Endothelial cell of umbilical vein (primary cell): ENCODE measurements at regions of chr15 and their contacts with region 1.

Region 1: GRCh38 chr15:36883713-36884517 is 216.4 kb downstream of the MEIS2 start:
- DNase-seq: peak; percentile 79
- H3K4me3 ChIP-seq: no peak overlapping the region
- H3K27ac ChIP-seq: no peak overlapping the region
- H3K4me1 ChIP-seq: peaks cover 11% of the 10 kb centered on the region
- H3K27me3 ChIP-seq: peaks cover 90 to 99% of the 10 kb centered on the region in 2 experiments
- CTCF ChIP-seq: peak; percentile 72 to 91
- POLR2A ChIP-seq: no peak

Region 2: GRCh38 chr15:36501063-36501678 is 382.7 kb before region 1 on chr15:
- CTCF ChIA-PET with region 1: interaction called, 3 read pairs
- POLR2A ChIA-PET with region 1: no interaction called
- dilution Hi-C with region 1: no loop called
- intact Hi-C with region 1: loop called (anchors 5 kb)
- DNase-seq: peak; percentile 69
- H3K4me3 ChIP-seq: no peak overlapping the region
- H3K27ac ChIP-seq: no peak overlapping the region
- H3K4me1 ChIP-seq: peaks cover 4% of the 10 kb centered on the region
- H3K27me3 ChIP-seq: no peaks in the 10 kb centered on the region
- CTCF ChIP-seq: peak; percentile 55 to 64
- POLR2A ChIP-seq: no peak

Region 3: DNA sequence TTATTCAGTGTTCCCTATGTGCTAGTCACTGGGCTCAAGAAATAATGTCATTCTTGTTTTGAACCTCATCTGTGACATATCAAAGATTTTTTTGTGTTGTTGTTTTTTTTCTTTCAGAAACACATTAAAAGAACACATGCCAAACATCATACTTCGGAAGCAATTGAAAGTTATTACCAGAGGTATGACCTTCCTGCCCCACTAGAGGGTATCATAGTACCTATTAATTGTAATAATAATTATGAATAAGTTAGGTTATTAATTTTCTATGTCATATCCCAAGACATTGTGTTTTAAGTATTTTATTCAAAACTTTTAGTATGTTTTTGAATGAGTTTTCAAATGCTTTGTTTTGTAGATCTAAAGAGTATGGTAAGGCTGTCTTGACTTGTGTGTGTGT is 238.8 kb before region 1 on chr15:
- CTCF ChIA-PET with region 1: no interaction called
- POLR2A ChIA-PET with region 1: no interaction called
- dilution Hi-C with region 1: no loop called
- intact Hi-C with region 1: loop called (anchors 2 kb)
- DNase-seq: peak; percentile 29
- H3K4me3 ChIP-seq: no peak overlapping the region
- H3K27ac ChIP-seq: no peak overlapping the region
- H3K4me1 ChIP-seq: no peaks in the 10 kb centered on the region
- H3K27me3 ChIP-seq: no peaks in the 10 kb centered on the region
- CTCF ChIP-seq: no peak
- POLR2A ChIP-seq: no peak

Region 4: GRCh38 chr15:37106490-37107001 is 222.6 kb after region 1 on chr15:
- CTCF ChIA-PET with region 1: interaction called, 53 read pairs
- POLR2A ChIA-PET with region 1: no interaction called
- dilution Hi-C with region 1: no loop called
- intact Hi-C with region 1: loop called (anchors 1 kb)
- DNase-seq: peak; percentile 34
- H3K4me3 ChIP-seq: no peak overlapping the region
- H3K27ac ChIP-seq: no peak overlapping the region
- H3K4me1 ChIP-seq: peaks cover 12% of the 10 kb centered on the region
- H3K27me3 ChIP-seq: peaks cover 63 to 90% of the 10 kb centered on the region in 2 experiments
- CTCF ChIP-seq: peak; percentile 31
- POLR2A ChIP-seq: no peak

Region 5: DNA sequence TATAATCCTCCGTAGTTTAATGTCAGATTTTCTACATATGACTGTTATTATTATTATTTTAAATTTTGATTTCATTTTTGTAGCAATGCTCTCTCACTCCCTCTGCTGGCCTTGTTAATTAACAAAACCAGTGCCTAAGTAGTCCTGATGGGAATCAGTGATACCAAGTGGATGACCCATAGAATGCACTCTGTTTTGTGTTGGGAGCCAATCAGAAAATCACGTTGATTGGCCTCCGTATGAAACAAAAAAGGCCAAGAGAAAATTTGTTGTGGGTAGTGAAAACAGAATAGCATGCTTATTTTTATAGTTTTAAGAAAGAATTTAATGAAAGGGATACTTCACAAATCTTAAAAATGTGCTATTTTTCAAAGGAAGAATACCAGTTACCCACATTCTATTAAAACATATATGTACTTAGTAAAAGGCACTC is 250.8 kb after region 1 on chr15:
- CTCF ChIA-PET with region 1: interaction called, 77 read pairs
- POLR2A ChIA-PET with region 1: no interaction called
- dilution Hi-C with region 1: no loop called
- intact Hi-C with region 1: loop called (anchors 1 kb)
- DNase-seq: peak; percentile 53
- H3K4me3 ChIP-seq: no peak overlapping the region
- H3K27ac ChIP-seq: no peak overlapping the region
- H3K4me1 ChIP-seq: no peaks in the 10 kb centered on the region
- H3K27me3 ChIP-seq: peaks cover 18 to 33% of the 10 kb centered on the region in 2 experiments
- CTCF ChIP-seq: peak; percentile 42 to 54
- POLR2A ChIP-seq: no peak